ENCODE measurements at regions of chr18 and their contacts with region 1.

Region 1: DNA sequence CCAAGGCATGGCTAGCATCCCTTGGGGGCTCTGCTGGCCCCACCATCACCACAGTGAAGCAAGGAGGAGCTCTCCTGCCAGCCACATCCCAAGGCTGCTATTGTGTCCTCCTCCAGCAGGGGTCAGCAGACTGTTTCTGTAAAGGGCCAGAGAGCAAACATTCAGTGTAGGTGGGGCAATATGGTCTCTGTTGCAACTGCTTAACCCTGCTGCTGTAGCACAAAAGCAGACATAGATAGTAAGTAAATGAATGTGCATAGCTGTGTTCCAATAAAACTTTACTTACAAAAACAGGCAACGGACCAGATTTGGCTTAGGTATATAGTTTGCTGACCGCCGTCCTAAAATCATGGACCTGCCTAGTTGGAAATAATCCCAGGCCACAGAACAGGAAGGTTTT is 36.4 kb upstream of the ZBTB7C start:
- DNase-seq: peak; percentile 74 to 87 (median 82)
- H3K4me3 ChIP-seq: no peak overlapping the region
- H3K27ac ChIP-seq: no peak overlapping the region
- H3K4me1 ChIP-seq: peaks cover 0 to 14% (median 11%) of the 10 kb centered on the region in 4 experiments
- H3K27me3 ChIP-seq: peaks cover 7 to 61% (median 26%) of the 10 kb centered on the region in 5 experiments

Region 2: GRCh38 chr18:48030616-48031480 is 414.7 kb before region 1 on chr18:
- CTCF ChIA-PET with region 1: interaction called, 53 read pairs
- POLR2A ChIA-PET with region 1: no interaction called
- DNase-seq: peak in 2 of 3 donors; percentile 13 to 22
- H3K4me3 ChIP-seq: no peak overlapping the region
- H3K27ac ChIP-seq: no peak overlapping the region
- H3K4me1 ChIP-seq: peaks cover 0 to 8% (median 4%) of the 10 kb centered on the region in 4 experiments
- H3K27me3 ChIP-seq: peaks cover 0 to 2% (median 0%) of the 10 kb centered on the region in 5 experiments

Region 3: DNA sequence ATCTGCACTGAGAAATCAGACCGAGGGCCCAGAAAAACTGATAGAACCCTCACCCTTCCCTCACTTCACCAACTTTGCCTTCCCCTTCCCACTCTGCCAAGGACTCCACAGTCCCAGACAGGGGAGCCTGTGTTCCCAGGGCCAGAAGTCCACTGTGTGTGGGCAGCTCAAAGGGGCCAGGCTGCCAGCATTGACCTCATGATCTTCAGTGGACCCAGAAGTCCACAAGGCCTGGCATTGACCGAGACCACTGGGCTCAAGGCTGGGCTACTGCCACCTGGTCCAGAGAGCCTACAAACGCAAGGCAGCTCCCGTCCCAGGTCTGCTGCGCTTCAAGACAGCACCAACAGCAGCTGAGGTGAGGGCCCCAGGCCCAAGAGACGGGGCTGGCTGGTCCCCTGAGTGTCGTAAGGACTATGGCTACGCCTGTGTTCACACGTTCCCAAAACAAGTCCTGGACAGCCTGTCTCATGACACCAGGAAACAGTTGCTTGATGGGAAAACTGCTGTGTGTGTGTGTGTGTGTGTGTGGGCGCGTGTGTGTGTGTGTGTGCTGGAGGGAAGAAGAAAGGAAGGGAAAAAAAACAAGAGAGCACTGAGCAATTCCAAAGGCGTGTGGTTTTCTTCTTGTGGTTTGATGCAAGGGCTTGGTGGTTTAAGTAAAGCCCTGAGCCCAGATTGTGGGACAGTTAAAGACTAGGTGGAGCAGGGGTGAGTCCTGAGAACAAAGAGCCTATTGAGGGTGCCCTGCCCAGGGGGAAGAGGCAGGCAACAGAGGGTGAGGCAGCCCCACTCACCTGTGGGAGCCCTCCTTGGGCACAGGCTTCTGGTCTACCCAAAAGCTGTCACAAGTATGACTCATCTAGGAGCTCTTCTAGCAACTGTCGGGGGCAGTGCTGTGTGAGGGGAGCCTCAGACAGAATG is 10.3 kb after region 1 on chr18:
- CTCF ChIA-PET with region 1: interaction called, 92 read pairs
- POLR2A ChIA-PET with region 1: no interaction called
- DNase-seq: peak; percentile 52 to 82 (median 76)
- H3K4me3 ChIP-seq: no peak overlapping the region
- H3K27ac ChIP-seq: no peak overlapping the region
- H3K4me1 ChIP-seq: peaks cover 0 to 26% (median 13%) of the 10 kb centered on the region in 4 experiments
- H3K27me3 ChIP-seq: peaks cover 2 to 85% (median 42%) of the 10 kb centered on the region in 5 experiments

Region 4: GRCh38 chr18:48470484-48471180 is 25.1 kb after region 1 on chr18:
- CTCF ChIA-PET with region 1: interaction called, 17 read pairs
- POLR2A ChIA-PET with region 1: no interaction called
- DNase-seq: no peak
- H3K4me3 ChIP-seq: no peak overlapping the region
- H3K27ac ChIP-seq: no peak overlapping the region
- H3K4me1 ChIP-seq: no peaks in the 10 kb centered on the region
- H3K27me3 ChIP-seq: peaks cover 0 to 17% (median 2%) of the 10 kb centered on the region in 5 experiments

Region 5: DNA sequence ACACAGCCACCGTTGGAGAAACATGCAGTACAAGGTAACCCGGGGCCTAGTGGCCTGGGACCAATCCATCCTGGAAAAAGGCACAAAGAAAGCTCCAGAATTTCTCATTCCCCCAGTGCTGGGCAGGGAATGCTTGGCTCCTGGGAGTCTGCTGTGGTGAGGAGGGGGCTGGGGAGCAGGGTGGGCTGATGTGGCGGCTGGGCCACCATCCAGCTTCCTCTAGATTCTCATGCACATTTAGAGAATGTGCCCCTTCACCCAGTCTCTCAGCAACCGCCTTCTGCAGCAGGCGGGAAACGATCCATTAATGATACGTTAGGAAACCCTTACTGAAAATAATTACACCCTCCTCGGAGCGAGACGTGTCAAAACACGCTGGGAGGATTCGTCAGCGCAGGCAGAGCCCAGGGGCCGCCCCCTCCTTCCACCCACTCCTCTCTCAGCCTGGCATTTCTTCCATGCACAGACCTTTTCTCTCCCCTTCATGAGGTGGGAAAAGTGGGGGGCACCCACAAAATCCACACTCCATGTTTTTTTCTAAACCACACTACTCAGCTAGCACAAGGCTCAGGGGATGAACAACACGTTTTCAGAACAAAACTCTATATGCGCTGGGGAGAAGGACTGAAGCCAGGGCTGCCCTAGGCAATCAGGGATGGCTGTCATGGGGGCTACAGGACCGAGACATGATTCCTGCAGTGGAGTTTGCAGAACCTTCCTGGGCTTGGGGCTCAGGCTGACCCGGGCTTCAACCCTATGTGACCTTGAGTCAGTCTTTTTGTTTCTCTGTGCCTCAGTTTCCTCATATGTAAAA is 561.3 kb after region 1 on chr18:
- CTCF ChIA-PET with region 1: no interaction called
- POLR2A ChIA-PET with region 1: no interaction called
- DNase-seq: no peak
- H3K4me3 ChIP-seq: no peak overlapping the region
- H3K27ac ChIP-seq: no peak overlapping the region
- H3K4me1 ChIP-seq: peaks cover 0 to 13% (median 8%) of the 10 kb centered on the region in 4 experiments
- H3K27me3 ChIP-seq: no peaks in the 10 kb centered on the region

Measured in common myeloid progenitor, CD34-positive (primary cell).